BJ (cell line): ENCODE measurements at regions of chr12 and their contacts with region 1.

Region 1: GRCh38 chr12:53757095-53757770 is 5.5 kb upstream of the CISTR start:
- DNase-seq: no peak
- H3K4me3 ChIP-seq: no peak overlapping the region
- H3K27me3 ChIP-seq: peaks cover 47% of the 10 kb centered on the region
- CTCF ChIP-seq: peak; percentile 88

Region 2: DNA sequence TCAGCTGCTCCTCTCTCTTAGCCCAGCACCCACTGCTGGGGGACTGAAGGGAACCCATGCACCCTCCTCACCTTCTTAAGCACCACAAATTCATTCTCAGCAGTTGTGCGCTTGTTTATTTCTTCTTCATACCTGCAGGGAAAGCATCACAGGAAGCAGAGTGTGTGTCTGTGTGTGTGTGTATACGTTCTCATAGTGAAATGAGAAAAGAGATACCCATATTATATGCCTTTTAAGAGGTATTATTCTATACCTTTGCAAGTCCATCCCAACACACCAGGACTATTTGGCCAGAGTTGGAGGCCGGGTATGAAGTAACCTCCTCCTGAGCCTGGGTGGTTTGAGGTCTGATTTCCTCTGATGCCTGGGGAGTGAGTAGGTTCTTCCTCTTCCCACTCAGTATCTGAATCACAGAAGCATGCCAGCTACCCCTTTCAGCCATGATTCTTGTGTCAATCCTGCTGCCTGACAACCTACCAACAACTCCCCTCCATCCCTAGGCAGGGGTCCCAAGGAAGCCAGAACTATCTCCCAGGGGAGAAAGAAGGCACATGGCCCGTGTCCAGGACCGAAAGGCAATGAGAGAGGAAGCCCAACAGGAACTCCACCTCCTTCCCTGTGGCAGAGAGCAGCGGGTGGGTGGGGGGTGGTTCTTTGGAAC is 1141.9 kb before region 1 on chr12:
- CTCF ChIA-PET with region 1: no interaction called
- POLR2A ChIA-PET with region 1: no interaction called
- DNase-seq: no peak
- H3K4me3 ChIP-seq: no peak overlapping the region
- H3K27me3 ChIP-seq: peaks cover 9% of the 10 kb centered on the region
- CTCF ChIP-seq: no peak

Region 3: DNA sequence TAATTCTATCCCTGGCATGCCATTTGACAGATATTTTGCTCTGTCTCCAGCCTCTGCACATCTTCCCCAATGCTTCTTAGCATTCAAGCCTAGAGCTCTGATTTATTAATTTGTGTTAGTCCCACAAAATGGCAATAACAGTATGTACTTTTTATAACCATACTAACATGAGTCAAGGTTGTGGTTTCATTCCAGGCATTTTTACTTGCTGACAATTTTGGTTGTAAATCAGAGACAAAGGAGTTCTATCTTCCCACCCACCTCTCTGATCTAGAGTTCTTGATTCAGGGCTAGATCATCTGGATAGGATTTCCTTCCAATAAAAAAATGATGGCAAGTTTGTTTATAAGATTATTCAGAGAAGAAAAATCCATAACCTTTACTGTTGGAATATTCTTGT is 13.0 kb after region 1 on chr12:
- CTCF ChIA-PET with region 1: interaction called, 15 read pairs
- POLR2A ChIA-PET with region 1: no interaction called
- DNase-seq: peak; percentile 96
- H3K4me3 ChIP-seq: no peak overlapping the region
- H3K27me3 ChIP-seq: no peaks in the 10 kb centered on the region
- CTCF ChIP-seq: no peak